Activated CD4-positive, alpha-beta T cell treated with anti-CD3 and anti-CD28 coated beads, Interleukin-2, amount 10 ng/mL, durations not matched to agents 7 days and 5 days (primary cell): ENCODE measurements at regions of chr6 and their contacts with region 1.

Region 1: GRCh38 chr6:45467853-45468252 is 90.1 kb upstream of the SUPT3H start:
- DNase-seq: no peak
- H3K4me3 Mint-ChIP-seq: no peak overlapping the region
- H3K27ac Mint-ChIP-seq: no peak overlapping the region
- H3K4me1 Mint-ChIP-seq: peaks cover 11% of the 10 kb centered on the region
- H3K27me3 Mint-ChIP-seq: no peaks in the 10 kb centered on the region

Region 2: GRCh38 chr6:45445364-45445748 is 22.5 kb before region 1 on chr6:
- CTCF ChIA-PET with region 1: no interaction called
- POLR2A ChIA-PET with region 1: no interaction called
- DNase-seq: no peak
- H3K4me3 Mint-ChIP-seq: no peak overlapping the region
- H3K27ac Mint-ChIP-seq: no peak overlapping the region
- H3K4me1 Mint-ChIP-seq: peaks cover 67% of the 10 kb centered on the region
- H3K27me3 Mint-ChIP-seq: no peaks in the 10 kb centered on the region

Region 3: GRCh38 chr6:45457141-45457540 is 10.7 kb before region 1 on chr6:
- CTCF ChIA-PET with region 1: interaction called, 11 read pairs
- POLR2A ChIA-PET with region 1: no interaction called
- DNase-seq: no peak
- H3K4me3 Mint-ChIP-seq: no peak overlapping the region
- H3K27ac Mint-ChIP-seq: no peak overlapping the region
- H3K4me1 Mint-ChIP-seq: peaks cover 23% of the 10 kb centered on the region
- H3K27me3 Mint-ChIP-seq: no peaks in the 10 kb centered on the region